ENCODE measurements at regions of chr9 and their contacts with region 1.

Region 1: DNA sequence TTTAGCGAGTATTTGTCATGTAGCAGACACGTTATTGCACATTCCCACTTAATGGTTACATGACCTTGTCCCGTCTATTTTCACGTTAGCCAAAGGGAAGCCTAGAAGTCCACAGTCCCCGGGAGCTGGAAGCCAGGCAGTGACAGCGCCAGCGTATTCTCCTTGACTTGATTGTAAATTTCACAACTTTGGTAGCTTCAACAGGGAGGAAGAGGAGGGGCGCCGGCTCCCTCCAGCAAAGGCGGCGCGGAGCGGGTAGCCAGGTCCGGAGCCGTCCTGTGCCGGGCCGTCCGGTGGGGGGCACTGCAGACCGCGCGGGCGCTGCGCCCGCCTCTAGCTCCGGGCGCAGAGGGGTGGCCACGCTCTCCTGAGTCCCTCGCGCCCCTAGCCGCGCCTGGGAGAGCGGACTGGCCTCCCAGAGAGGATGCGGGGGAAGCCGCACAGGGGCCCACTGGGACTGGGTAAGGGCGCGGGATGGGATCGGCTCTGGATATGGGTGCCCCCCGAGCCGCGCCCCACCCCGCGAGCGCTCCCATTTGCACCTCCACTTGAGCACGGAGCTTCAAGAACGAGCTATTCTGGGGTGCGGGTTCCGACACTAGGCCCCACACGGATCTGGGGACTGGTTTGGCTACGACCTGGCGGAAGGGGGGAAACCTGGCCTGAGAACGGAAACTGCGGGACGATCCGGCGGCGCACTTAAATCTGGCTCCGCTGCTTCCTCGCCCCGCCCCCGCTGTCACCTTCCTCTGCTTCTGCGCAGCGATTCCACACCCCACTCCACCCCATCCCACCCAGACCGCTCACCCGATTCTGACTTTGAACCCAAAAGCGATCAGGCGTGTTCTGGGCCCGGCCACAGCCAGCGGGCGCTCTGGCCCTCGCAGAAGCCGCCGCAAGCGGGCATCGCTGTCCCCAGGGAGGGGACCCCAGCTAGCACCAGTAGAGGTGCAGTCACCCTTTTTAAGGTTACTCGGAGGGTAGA is 23.8 kb downstream of the KLF4 start:
- DNase-seq: peak; percentile 65 to 85 (median 77)
- H3K4me3 ChIP-seq: peak overlapping the region; percentile 44
- H3K27ac ChIP-seq: no peak overlapping the region
- H3K4me1 ChIP-seq: no peaks in the 10 kb centered on the region
- H3K27me3 ChIP-seq: no peaks in the 10 kb centered on the region
- CTCF ChIP-seq: peak; percentile 85 to 90 (median 85)
- EP300 ChIP-seq: no peak
- POLR2A ChIP-seq: no peak

Region 2: DNA sequence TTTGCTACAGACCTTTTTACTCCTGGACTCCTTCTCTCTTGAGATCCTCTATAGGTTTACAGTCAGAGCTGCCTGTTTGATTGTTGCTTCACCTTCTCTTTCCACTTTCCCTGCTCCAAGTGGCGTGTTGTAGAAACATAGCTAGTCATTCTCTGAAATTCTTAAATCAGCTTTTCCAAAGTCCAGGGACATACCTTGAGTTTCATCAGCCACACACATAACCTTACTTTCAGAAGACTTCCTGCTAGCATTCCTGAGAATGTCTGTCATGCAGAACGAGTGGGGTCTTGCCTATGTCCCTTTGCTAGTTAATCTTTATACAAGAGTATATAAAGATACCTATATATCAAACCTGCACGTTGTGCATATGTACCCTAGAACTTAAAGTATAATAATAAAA is 833.1 kb before region 1 on chr9:
- intact Hi-C with region 1: no loop called
- DNase-seq: no peak
- H3K4me3 ChIP-seq: no peak overlapping the region
- H3K27ac ChIP-seq: no peak overlapping the region
- H3K4me1 ChIP-seq: no peaks in the 10 kb centered on the region
- H3K27me3 ChIP-seq: no peaks in the 10 kb centered on the region
- CTCF ChIP-seq: no peak
- EP300 ChIP-seq: no peak
- POLR2A ChIP-seq: no peak

Region 3: GRCh38 chr9:107397723-107398044 is 68.1 kb before region 1 on chr9:
- intact Hi-C with region 1: no loop called
- DNase-seq: no peak
- H3K4me3 ChIP-seq: no peak overlapping the region
- H3K27ac ChIP-seq: no peak overlapping the region
- H3K4me1 ChIP-seq: no peaks in the 10 kb centered on the region
- H3K27me3 ChIP-seq: no peaks in the 10 kb centered on the region
- CTCF ChIP-seq: no peak
- EP300 ChIP-seq: no peak
- POLR2A ChIP-seq: no peak

Region 4: GRCh38 chr9:107548048-107548800 is 82.5 kb after region 1 on chr9:
- intact Hi-C with region 1: no loop called
- DNase-seq: peak in 2 of 5 donors; percentile 11 to 69
- H3K4me3 ChIP-seq: no peak overlapping the region
- H3K27ac ChIP-seq: no peak overlapping the region
- H3K4me1 ChIP-seq: peaks cover 8% of the 10 kb centered on the region
- H3K27me3 ChIP-seq: no peaks in the 10 kb centered on the region
- CTCF ChIP-seq: no peak
- EP300 ChIP-seq: no peak
- POLR2A ChIP-seq: no peak

Region 5: GRCh38 chr9:108439911-108440315 is 974.2 kb after region 1 on chr9:
- intact Hi-C with region 1: loop called in 1 of 4 experiments (anchors 10 kb)
- DNase-seq: no peak
- H3K4me3 ChIP-seq: no peak overlapping the region
- H3K27ac ChIP-seq: no peak overlapping the region
- H3K4me1 ChIP-seq: no peaks in the 10 kb centered on the region
- H3K27me3 ChIP-seq: no peaks in the 10 kb centered on the region
- CTCF ChIP-seq: no peak
- EP300 ChIP-seq: no peak
- POLR2A ChIP-seq: no peak

Region 6: DNA sequence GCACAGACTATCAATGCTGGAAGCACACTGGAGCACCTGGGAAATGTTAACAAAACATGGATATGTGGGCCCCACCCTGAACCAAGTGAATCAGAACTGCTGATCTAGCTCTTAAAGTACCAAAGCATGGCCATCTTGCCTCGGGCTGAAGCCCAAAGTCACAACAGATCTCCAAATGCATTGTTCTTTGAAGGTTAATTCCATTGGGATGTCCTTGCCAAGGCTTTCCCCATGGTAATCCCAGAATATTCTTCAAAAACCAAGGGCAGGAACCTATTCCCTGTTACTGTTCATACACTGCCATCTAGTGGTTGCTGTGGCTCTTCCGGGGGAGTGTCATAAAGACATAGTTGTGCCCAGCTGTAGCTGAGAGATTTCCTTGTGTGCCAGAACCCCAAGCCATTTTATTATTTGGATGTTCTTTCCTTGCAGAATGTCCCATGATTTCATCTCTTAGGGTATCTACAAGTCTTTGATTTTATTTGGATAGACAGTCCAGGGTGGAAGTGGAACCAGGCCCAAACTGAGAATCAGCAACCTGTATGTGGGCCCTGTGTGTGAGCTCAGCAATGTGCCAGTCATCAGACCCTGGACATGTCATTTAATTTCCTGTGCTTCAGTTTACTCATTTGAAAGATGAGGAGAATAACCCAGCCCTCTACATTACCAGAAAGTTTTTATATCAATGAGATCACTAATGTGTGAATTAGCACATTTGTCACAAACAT is 1100.1 kb after region 1 on chr9:
- intact Hi-C with region 1: loop called in 3 of 4 experiments (anchors 5 to 10 kb)
- DNase-seq: peak; percentile 22 to 60 (median 41)
- H3K4me3 ChIP-seq: no peak overlapping the region
- H3K27ac ChIP-seq: no peak overlapping the region
- H3K4me1 ChIP-seq: no peaks in the 10 kb centered on the region
- H3K27me3 ChIP-seq: no peaks in the 10 kb centered on the region
- CTCF ChIP-seq: peak; percentile 42 to 76 (median 60)
- EP300 ChIP-seq: no peak
- POLR2A ChIP-seq: no peak